HEK293 (cell line): ENCODE measurements at regions of chr10 and their contacts with region 1.

Region 1: GRCh38 chr10:129670124-129670523 is 203.1 kb downstream of the MGMT start:
- H3K4me3 ChIP-seq: no peak overlapping the region
- H3K27ac ChIP-seq: no peak overlapping the region
- H3K4me1 ChIP-seq: no peaks in the 10 kb centered on the region
- CTCF ChIP-seq: no peak

Region 2: GRCh38 chr10:129101232-129101980 is 568.7 kb before region 1 on chr10:
- CTCF ChIA-PET with region 1: no interaction called
- POLR2A ChIA-PET with region 1: no interaction called
- H3K4me3 ChIP-seq: no peak overlapping the region
- H3K27ac ChIP-seq: no peak overlapping the region
- H3K4me1 ChIP-seq: peaks cover 19% of the 10 kb centered on the region
- CTCF ChIP-seq: no peak

Region 3: DNA sequence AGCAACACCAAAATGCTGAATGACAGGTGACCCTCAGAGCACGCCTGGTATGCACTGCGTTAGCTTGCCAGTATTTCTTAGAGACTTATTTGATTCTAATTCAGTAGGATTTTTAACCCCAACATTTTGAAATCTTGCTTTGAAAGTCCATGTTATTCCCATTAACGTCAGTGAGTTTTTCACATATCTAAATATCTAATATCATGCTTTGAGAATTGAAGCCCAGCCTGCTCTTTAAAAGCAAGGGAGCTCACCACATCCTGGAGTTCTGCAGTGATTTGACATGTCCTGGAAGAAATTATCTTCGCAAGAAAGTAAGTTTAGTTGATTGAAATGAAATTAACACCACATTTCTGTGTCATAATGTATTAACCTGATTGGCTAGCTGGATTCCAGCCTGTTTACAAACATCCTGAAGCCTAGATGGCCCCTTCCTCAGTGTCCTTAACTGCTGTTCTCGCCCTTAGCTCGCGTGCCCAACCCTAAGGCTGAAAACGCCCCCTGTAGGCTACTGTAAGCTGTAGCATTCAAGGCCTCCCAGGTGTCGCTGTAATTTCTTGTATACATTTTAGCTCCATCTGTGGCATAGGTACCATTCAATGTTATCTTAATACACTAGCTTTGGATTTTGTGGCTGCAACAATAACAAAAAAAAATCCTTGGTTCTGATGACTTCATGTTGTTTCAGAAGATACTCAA is 11.6 kb before region 1 on chr10:
- CTCF ChIA-PET with region 1: interaction called, 18 read pairs
- POLR2A ChIA-PET with region 1: no interaction called
- H3K4me3 ChIP-seq: no peak overlapping the region
- H3K27ac ChIP-seq: no peak overlapping the region
- H3K4me1 ChIP-seq: no peaks in the 10 kb centered on the region; the same call in 1 of the 2 replicates
- CTCF ChIP-seq: no peak

Region 4: GRCh38 chr10:129694691-129695243 is 24.6 kb after region 1 on chr10:
- CTCF ChIA-PET with region 1: no interaction called
- POLR2A ChIA-PET with region 1: no interaction called
- H3K4me3 ChIP-seq: no peak overlapping the region
- H3K27ac ChIP-seq: no peak overlapping the region
- H3K4me1 ChIP-seq: no peaks in the 10 kb centered on the region
- CTCF ChIP-seq: no peak